Ovary (tissue), 10 donors: ENCODE measurements at regions of chr2 and their contacts with region 1.

Region 1: GRCh38 chr2:239401067-239401880 is 454 bp upstream of the HDAC4 start:
- DNase-seq: peak; percentile 99 to 100 (median 99)
- H3K4me3 ChIP-seq: peak overlapping the region; percentile 68
- H3K27ac ChIP-seq: peak overlapping the region; percentile 97 to 99
- H3K4me1 ChIP-seq: peaks cover 1% of the 10 kb centered on the region
- H3K27me3 ChIP-seq: no peaks in the 10 kb centered on the region
- CTCF ChIP-seq: peak in 1 of 3 donors; percentile 24
- EP300 ChIP-seq: peak; percentile 65
- POLR2A ChIP-seq: peak; percentile 99

Region 2: DNA sequence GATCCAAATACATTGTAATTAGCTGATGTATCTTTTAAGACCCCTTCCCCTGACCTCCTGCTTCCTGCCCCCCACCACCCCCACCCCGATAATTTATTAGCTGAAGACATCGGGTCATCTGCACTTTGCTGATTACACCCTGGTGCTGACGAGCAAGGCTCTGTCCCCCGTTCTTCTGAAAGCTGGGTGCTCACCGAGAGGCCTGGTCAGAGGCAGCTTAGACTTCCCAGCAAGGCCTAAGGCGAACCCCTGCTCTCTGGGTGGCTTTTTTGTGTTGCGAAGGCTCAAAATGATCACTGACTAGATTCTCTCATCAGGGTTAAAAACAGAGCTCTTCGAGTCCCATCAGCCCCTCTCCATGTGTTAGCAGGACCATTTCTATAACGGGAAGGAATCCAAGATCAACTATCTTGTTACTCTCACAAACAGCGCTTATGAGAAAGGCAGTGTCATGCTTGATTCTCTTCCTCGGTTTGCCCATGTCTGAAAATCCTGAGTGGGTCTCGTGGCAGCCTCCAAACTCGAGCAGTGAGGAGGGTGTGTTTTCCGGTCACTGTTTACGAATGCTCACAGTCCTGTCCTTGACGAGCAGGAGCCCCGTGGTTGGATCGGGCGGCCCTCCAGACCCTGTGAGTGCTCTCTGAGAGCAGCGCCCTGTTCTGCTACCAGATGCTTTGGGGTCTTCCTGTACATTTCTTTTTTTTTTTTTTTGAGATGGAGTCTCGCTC is 202.1 kb before region 1 on chr2:
- intact Hi-C with region 1: loop called in 1 of 4 experiments (anchors 5 kb)
- DNase-seq: peak; percentile 83 to 91 (median 85)
- H3K4me3 ChIP-seq: no peak overlapping the region
- H3K27ac ChIP-seq: peak overlapping the region; percentile 78 to 93
- H3K4me1 ChIP-seq: peaks cover 11% of the 10 kb centered on the region
- H3K27me3 ChIP-seq: no peaks in the 10 kb centered on the region
- CTCF ChIP-seq: no peak
- EP300 ChIP-seq: no peak
- POLR2A ChIP-seq: peak; percentile 34

Region 3: GRCh38 chr2:239223310-239224198 is 177.7 kb before region 1 on chr2:
- intact Hi-C with region 1: loop called in 1 of 4 experiments (anchors 10 kb)
- DNase-seq: peak in 1 of 5 donors; percentile 42
- H3K4me3 ChIP-seq: no peak overlapping the region
- H3K27ac ChIP-seq: peak overlapping the region in 1 of 2 donors; percentile 84
- H3K4me1 ChIP-seq: peaks cover 41% of the 10 kb centered on the region
- H3K27me3 ChIP-seq: no peaks in the 10 kb centered on the region
- CTCF ChIP-seq: no peak
- EP300 ChIP-seq: no peak
- POLR2A ChIP-seq: no peak

Region 4: GRCh38 chr2:239267288-239267951 is 133.9 kb before region 1 on chr2:
- intact Hi-C with region 1: loop called in 1 of 4 experiments (anchors 10 kb)
- DNase-seq: peak; percentile 53 to 63 (median 58)
- H3K4me3 ChIP-seq: no peak overlapping the region
- H3K27ac ChIP-seq: peak overlapping the region in 1 of 2 donors; percentile 49
- H3K4me1 ChIP-seq: peaks cover 50% of the 10 kb centered on the region
- H3K27me3 ChIP-seq: no peaks in the 10 kb centered on the region
- CTCF ChIP-seq: no peak
- EP300 ChIP-seq: no peak
- POLR2A ChIP-seq: no peak

Region 5: GRCh38 chr2:239339726-239340601 is 61.3 kb before region 1 on chr2:
- intact Hi-C with region 1: loop called in 1 of 4 experiments (anchors 10 kb)
- DNase-seq: no peak
- H3K4me3 ChIP-seq: no peak overlapping the region
- H3K27ac ChIP-seq: no peak overlapping the region
- H3K4me1 ChIP-seq: peaks cover 3% of the 10 kb centered on the region
- H3K27me3 ChIP-seq: no peaks in the 10 kb centered on the region
- CTCF ChIP-seq: no peak
- EP300 ChIP-seq: no peak
- POLR2A ChIP-seq: no peak

Region 6: DNA sequence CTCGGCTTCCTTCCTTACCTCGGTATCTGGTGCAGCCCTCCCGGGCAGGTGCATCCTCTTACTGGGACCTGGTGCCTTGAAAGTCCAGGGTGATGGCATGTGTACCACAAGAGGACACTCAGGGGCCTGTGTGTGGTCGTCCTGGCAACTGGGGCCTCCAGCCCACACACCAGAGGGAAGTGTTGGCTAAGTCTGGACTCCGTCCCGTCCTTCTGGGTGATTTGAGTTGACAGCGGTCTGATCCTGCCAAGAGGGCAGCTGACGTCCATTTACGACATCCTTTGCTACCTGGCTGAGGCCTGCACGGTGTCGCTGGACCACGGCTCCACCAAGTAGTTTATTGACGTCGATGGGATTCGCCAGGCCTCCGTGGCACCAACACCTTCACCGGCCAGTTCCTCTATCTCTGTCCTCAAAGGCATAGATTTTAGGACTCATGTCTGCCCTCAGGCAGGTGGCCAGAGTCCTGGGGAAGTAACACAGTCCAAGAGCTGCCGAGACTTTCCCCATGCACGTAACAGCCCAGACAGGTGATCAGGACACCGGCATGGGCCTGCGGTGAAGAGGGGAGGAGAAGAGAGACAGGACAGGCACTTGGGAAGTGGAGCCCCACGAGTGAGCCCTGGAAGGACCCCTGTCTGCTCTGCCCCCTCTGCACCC is 185.5 kb after region 1 on chr2:
- intact Hi-C with region 1: no loop called
- DNase-seq: peak in 1 of 5 donors; percentile 6
- H3K4me3 ChIP-seq: no peak overlapping the region
- H3K27ac ChIP-seq: no peak overlapping the region
- H3K4me1 ChIP-seq: no peaks in the 10 kb centered on the region
- H3K27me3 ChIP-seq: no peaks in the 10 kb centered on the region
- CTCF ChIP-seq: no peak
- EP300 ChIP-seq: no peak
- POLR2A ChIP-seq: no peak

Region 7: GRCh38 chr2:240560480-240561326 is 1159.4 kb after region 1 on chr2:
- intact Hi-C with region 1: loop called in 1 of 4 experiments (anchors 10 kb)
- DNase-seq: peak; percentile 100
- H3K4me3 ChIP-seq: peak overlapping the region; percentile 98
- H3K27ac ChIP-seq: peak overlapping the region; percentile 97 to 98
- H3K4me1 ChIP-seq: peaks cover 23% of the 10 kb centered on the region
- H3K27me3 ChIP-seq: no peaks in the 10 kb centered on the region
- CTCF ChIP-seq: peak; percentile 23 to 46 (median 42)
- EP300 ChIP-seq: no peak
- POLR2A ChIP-seq: peak; percentile 48